GM12878 (cell line): ENCODE measurements at regions of chr6 and their contacts with region 1.

Region 1: GRCh38 chr6:83884523-83884922 is 25.0 kb downstream of the CYB5R4 start:
- DNase-seq: peak; percentile 37
- ATAC-seq: peak; percentile 88
- H3K4me3 ChIP-seq: no peak overlapping the region
- H3K27ac ChIP-seq: no peak overlapping the region
- H3K4me1 ChIP-seq: no peaks in the 10 kb centered on the region
- H3K27me3 ChIP-seq: no peaks in the 10 kb centered on the region
- CTCF ChIP-seq: peak; percentile 42 to 85 (median 69); a peak in 5 of 6 replicates
- EP300 ChIP-seq: no peak
- POLR2A ChIP-seq: no peak
- RAD21 ChIP-seq: peak; percentile 91

Region 2: DNA sequence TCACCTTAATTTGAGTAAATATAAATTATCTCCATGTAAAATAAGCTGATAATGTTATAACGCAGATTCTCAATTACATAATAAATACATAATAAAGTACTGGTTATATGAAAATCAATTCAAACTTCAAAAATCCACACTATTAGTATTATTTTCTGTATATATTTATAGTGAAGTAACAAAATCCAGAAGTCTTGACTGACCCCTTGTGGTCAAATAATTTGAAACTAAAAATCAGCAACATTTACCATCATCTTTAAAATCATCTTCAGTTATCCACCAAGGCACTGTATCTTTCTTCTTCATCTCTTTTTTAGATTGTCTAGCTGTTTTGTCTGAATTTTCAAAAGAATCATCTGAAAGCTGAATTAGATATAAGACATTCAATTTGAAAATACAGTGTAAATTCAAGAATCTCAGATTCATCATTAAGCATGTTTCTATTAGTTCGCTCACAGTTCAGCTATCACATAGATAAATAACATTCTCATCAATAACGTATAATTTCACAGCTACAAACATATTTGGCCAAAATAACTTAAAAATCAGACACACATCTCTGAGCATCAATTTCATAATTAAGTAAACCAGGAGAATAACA is 336.4 kb after region 1 on chr6:
- CTCF ChIA-PET with region 1: interaction called, 153 read pairs
- POLR2A ChIA-PET with region 1: no interaction called
- RAD21 ChIA-PET with region 1: interaction called, 22 read pairs
- SMC1A ChIA-PET with region 1: interaction called, 23 read pairs
- in situ Hi-C with region 1: no loop called
- intact Hi-C with region 1: loop called (anchors 1 kb)
- DNase-seq: no peak
- ATAC-seq: 0 out of 3 replicates have a peak, but pooled peaks have one; percentile 39
- H3K4me3 ChIP-seq: no peak overlapping the region
- H3K27ac ChIP-seq: no peak overlapping the region
- H3K4me1 ChIP-seq: no peaks in the 10 kb centered on the region
- H3K27me3 ChIP-seq: no peaks in the 10 kb centered on the region
- CTCF ChIP-seq: peak; percentile 30 to 52 (median 36); a peak in 3 of 6 replicates
- EP300 ChIP-seq: no peak
- POLR2A ChIP-seq: no peak
- RAD21 ChIP-seq: peak; percentile 64

Region 3: GRCh38 chr6:84227434-84228197 is 343.1 kb after region 1 on chr6 and contains the start of gene CEP162:
- CTCF ChIA-PET with region 1: interaction called, 153 read pairs
- POLR2A ChIA-PET with region 1: no interaction called
- RAD21 ChIA-PET with region 1: interaction called, 19 read pairs
- SMC1A ChIA-PET with region 1: interaction called, 22 read pairs
- in situ Hi-C with region 1: no loop called
- intact Hi-C with region 1: no loop called
- DNase-seq: peak; percentile 79
- ATAC-seq: peak; percentile 98
- H3K4me3 ChIP-seq: peak within 1 kb of the TSS; percentile 95
- H3K27ac ChIP-seq: peak within 1 kb of the TSS; percentile 51
- H3K4me1 ChIP-seq: no peaks in the 10 kb centered on the region
- H3K27me3 ChIP-seq: no peaks in the 10 kb centered on the region
- CTCF ChIP-seq: peak; percentile 59 to 69 (median 60)
- EP300 ChIP-seq: no peak
- POLR2A ChIP-seq: peak; percentile 52
- RAD21 ChIP-seq: peak; percentile 28
- polyA plus RNA-seq, gene CEP162: 2.7 to 2.8 TPM

Region 4: DNA sequence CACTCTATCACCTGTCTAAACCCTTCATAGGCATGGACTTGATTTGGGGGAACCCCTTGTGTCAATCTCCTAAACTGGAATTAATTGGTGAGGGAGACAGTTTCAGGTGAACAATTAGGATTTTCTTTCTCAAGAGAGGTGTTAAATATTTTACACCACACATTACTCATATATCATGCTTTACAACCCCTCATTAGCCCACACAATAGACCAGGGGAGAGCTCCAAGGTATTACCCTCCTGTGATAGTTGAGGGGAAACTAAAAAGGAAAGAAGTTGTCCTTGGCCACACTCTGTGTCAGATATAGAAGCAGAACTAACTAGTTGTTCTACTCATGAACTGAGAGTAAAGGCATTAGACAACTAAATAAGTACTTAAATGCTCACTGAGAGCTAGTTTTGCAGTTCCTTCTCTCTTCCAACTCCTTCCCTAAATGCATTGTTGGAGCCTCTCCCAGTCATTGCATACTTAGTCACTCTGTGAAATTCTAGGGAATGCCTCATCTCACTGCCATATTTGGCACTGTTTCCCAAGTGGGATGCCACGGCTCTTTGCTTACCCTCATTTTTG is 526.6 kb after region 1 on chr6:
- CTCF ChIA-PET with region 1: no interaction called
- POLR2A ChIA-PET with region 1: no interaction called
- RAD21 ChIA-PET with region 1: no interaction called
- SMC1A ChIA-PET with region 1: no interaction called
- in situ Hi-C with region 1: no loop called
- intact Hi-C with region 1: loop called (anchors 10 kb)
- DNase-seq: no peak
- ATAC-seq: peak; percentile 96
- H3K4me3 ChIP-seq: no peak overlapping the region
- H3K27ac ChIP-seq: no peak overlapping the region
- H3K4me1 ChIP-seq: no peaks in the 10 kb centered on the region
- H3K27me3 ChIP-seq: no peaks in the 10 kb centered on the region
- CTCF ChIP-seq: no peak
- EP300 ChIP-seq: peak; percentile 82 to 88; a peak in 2 of 4 replicates
- POLR2A ChIP-seq: no peak
- RAD21 ChIP-seq: no peak

Region 5: DNA sequence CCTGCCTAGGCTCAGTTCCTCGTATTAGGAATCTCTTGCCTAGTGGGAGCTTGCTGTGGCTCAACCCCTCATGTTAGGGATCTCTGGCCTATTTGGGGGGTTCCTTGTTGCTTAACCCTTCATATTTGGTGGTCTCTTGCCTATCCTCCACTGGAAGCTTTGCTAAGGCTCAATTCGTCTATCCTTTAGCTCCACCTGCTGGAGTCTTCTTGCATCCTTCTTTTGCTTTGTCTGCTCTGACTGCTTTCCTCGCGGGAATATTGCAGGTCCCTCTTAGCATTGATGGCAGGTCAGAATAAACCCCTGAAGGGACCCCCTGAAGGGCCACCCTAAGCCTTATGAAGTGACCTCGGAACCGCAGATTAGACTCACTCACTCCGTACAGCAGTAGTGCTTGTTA is 1082.9 kb after region 1 on chr6:
- CTCF ChIA-PET with region 1: no interaction called
- POLR2A ChIA-PET with region 1: no interaction called
- RAD21 ChIA-PET with region 1: no interaction called
- SMC1A ChIA-PET with region 1: no interaction called
- in situ Hi-C with region 1: no loop called
- intact Hi-C with region 1: loop called (anchors 5 kb)
- DNase-seq: no peak
- ATAC-seq: peak; percentile 42; the same call in 1 of the 3 replicates
- H3K4me3 ChIP-seq: no peak overlapping the region
- H3K27ac ChIP-seq: no peak overlapping the region
- H3K4me1 ChIP-seq: no peaks in the 10 kb centered on the region
- H3K27me3 ChIP-seq: no peaks in the 10 kb centered on the region
- CTCF ChIP-seq: peak; percentile 27 to 41 (median 35); a peak in 4 of 6 replicates
- EP300 ChIP-seq: no peak
- POLR2A ChIP-seq: no peak
- RAD21 ChIP-seq: peak; percentile 56

Region 6: GRCh38 chr6:85323435-85324040 is 1439.0 kb after region 1 on chr6:
- CTCF ChIA-PET with region 1: interaction called, 3 read pairs
- POLR2A ChIA-PET with region 1: no interaction called
- RAD21 ChIA-PET with region 1: no interaction called
- SMC1A ChIA-PET with region 1: interaction called, 4 read pairs
- in situ Hi-C with region 1: no loop called
- intact Hi-C with region 1: loop called (anchors 10 kb)
- DNase-seq: peak; percentile 25
- ATAC-seq: peak; percentile 93
- H3K4me3 ChIP-seq: no peak overlapping the region
- H3K27ac ChIP-seq: no peak overlapping the region
- H3K4me1 ChIP-seq: no peaks in the 10 kb centered on the region
- H3K27me3 ChIP-seq: no peaks in the 10 kb centered on the region; a peak in 1 of 4 replicates
- CTCF ChIP-seq: peak; percentile 80 to 88 (median 84)
- EP300 ChIP-seq: no peak
- POLR2A ChIP-seq: no peak
- RAD21 ChIP-seq: peak; percentile 92